WTC11 (cell line): ENCODE measurements at regions of chr11 and their contacts with region 1.

Region 1: DNA sequence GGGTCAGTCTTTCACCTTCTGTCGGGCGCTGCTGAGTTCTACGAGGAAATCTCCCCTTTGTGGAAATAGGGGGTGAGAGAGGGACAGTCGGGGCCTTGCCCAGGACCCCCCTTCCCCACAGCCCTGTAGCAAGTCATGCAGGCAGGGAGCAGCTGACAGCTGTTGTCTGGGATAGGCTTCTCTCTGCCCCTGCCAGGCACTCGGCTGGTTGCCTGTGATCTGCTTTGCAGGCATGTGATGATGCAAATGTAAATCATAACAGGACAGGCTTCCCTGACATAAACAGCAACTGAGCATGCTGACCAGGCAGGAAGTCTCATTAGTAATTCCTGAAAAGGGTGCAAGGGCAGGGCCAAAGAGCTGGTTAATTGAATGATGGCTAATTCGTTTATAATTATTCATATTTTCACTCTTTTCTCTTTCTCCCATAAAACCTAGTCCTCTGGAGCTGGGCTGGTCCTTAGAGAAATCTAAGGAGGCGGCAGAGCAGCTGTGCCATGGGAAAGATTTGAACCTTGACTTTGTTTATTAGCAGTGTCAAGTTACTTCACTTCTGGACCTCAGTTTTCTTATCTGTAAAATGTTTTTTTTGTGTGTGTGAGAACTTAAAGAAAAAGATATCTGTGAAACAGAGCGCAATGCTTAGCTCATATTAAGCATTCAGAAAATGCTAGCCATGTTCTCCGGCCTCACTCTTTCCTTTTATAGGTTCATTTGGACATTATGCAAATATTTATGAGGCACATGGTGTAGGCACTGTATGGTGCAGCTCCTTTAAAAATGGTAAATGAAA is 129.7 kb downstream of the LDLRAD3 start:
- DNase-seq: no peak
- ATAC-seq: no peak
- H3K4me3 Mint-ChIP-seq: no peak overlapping the region
- H3K27ac Mint-ChIP-seq: peak overlapping the region; percentile 82
- H3K4me1 Mint-ChIP-seq: peaks cover 59% of the 10 kb centered on the region
- H3K27me3 Mint-ChIP-seq: no peaks in the 10 kb centered on the region; the same call in 1 of the 2 replicates
- CTCF ChIP-seq: no peak

Region 2: GRCh38 chr11:35765211-35765610 is 308.4 kb before region 1 on chr11:
- CTCF ChIA-PET with region 1: no interaction called
- POLR2A ChIA-PET with region 1: no interaction called
- DNase-seq: no peak
- ATAC-seq: no peak
- H3K4me3 Mint-ChIP-seq: no peak overlapping the region
- H3K27ac Mint-ChIP-seq: no peak overlapping the region
- H3K4me1 Mint-ChIP-seq: peaks cover 9% of the 10 kb centered on the region
- H3K27me3 Mint-ChIP-seq: no peaks in the 10 kb centered on the region
- CTCF ChIP-seq: no peak

Region 3: GRCh38 chr11:35800970-35801953 is 272.3 kb before region 1 on chr11:
- CTCF ChIA-PET with region 1: interaction called, 11 read pairs
- POLR2A ChIA-PET with region 1: no interaction called
- DNase-seq: no peak
- ATAC-seq: no peak
- H3K4me3 Mint-ChIP-seq: no peak overlapping the region
- H3K27ac Mint-ChIP-seq: no peak overlapping the region
- H3K4me1 Mint-ChIP-seq: no peaks in the 10 kb centered on the region; the same call in none of the 2 replicates
- H3K27me3 Mint-ChIP-seq: no peaks in the 10 kb centered on the region
- CTCF ChIP-seq: no peak

Region 4: GRCh38 chr11:36030731-36031281 is 42.8 kb before region 1 on chr11:
- CTCF ChIA-PET with region 1: no interaction called
- POLR2A ChIA-PET with region 1: no interaction called
- DNase-seq: no peak
- ATAC-seq: no peak
- H3K4me3 Mint-ChIP-seq: no peak overlapping the region
- H3K27ac Mint-ChIP-seq: peak overlapping the region; percentile 77; the same call in 1 of the 2 replicates
- H3K4me1 Mint-ChIP-seq: peaks cover 43% of the 10 kb centered on the region
- H3K27me3 Mint-ChIP-seq: no peaks in the 10 kb centered on the region
- CTCF ChIP-seq: no peak

Region 5: DNA sequence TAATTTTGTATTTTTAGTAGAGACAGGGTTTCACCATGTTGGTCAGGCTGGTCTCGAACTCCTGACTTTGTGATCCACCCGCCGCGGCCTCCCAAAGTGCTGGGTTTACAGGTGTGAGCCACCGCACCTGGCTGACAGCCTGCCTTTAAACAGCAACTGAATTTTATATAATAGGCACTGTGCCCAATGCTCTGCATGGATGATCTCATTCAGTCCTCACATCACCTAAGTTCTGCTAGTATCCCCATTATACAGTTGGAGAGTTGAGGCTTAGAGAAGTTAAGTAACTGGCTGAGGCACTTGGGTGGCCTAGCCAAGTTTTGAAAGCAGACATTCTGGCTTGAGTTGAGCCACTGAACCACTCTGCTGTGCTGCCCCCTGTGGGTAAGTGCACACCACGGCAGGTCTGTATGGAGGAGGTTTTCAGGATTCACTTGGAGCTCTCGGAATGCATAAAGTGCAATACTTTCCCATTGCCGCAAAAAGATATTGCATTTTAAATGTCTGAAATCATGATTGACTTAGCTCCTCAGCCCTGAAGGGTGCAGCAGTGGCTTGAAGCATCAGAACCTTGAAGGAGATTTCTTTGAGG is 17.4 kb before region 1 on chr11:
- CTCF ChIA-PET with region 1: interaction called, 66 read pairs
- POLR2A ChIA-PET with region 1: interaction called, 4 read pairs
- DNase-seq: peak; percentile 71
- ATAC-seq: peak; percentile 88
- H3K4me3 Mint-ChIP-seq: no peak overlapping the region
- H3K27ac Mint-ChIP-seq: no peak overlapping the region
- H3K4me1 Mint-ChIP-seq: peaks cover 29% of the 10 kb centered on the region
- H3K27me3 Mint-ChIP-seq: no peaks in the 10 kb centered on the region
- CTCF ChIP-seq: peak; percentile 81

Region 6: GRCh38 chr11:36091256-36091811 is 17.7 kb after region 1 on chr11:
- CTCF ChIA-PET with region 1: interaction called, 18 read pairs
- POLR2A ChIA-PET with region 1: no interaction called
- DNase-seq: no peak
- ATAC-seq: no peak
- H3K4me3 Mint-ChIP-seq: no peak overlapping the region
- H3K27ac Mint-ChIP-seq: peak overlapping the region; percentile 90
- H3K4me1 Mint-ChIP-seq: peaks cover 65% of the 10 kb centered on the region
- H3K27me3 Mint-ChIP-seq: no peaks in the 10 kb centered on the region; the same call in 1 of the 2 replicates
- CTCF ChIP-seq: no peak

Region 7: GRCh38 chr11:36258730-36259360 is 185.2 kb after region 1 on chr11:
- CTCF ChIA-PET with region 1: interaction called, 11 read pairs
- POLR2A ChIA-PET with region 1: no interaction called
- DNase-seq: peak; percentile 74
- ATAC-seq: peak; percentile 93
- H3K4me3 Mint-ChIP-seq: no peak overlapping the region
- H3K27ac Mint-ChIP-seq: no peak overlapping the region
- H3K4me1 Mint-ChIP-seq: peaks cover 5% of the 10 kb centered on the region; the same call in 1 of the 2 replicates
- H3K27me3 Mint-ChIP-seq: peaks cover 12% of the 10 kb centered on the region
- CTCF ChIP-seq: 0 out of 2 replicates have a peak, but pooled peaks have one; percentile 20

Region 8: DNA sequence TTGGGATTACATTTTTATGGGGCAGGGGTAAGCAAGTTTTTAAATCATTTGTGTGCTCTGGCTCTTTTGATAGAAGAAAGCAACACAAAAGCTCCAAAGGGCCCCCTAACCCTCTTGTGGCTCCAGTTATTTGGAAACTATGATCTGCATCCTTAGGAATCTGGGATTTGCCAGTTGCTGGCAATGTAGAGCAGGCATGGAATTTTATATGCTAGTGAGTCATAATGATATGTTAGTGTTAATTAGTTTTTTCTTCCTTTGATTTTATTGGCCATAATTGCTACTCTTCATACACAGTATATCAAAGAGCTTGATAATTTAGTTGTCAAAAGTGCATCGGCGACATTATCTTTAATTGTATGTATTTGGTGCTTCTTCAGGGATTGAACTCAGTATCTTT is 504.3 kb after region 1 on chr11:
- CTCF ChIA-PET with region 1: no interaction called
- POLR2A ChIA-PET with region 1: no interaction called
- DNase-seq: no peak
- ATAC-seq: no peak
- H3K4me3 Mint-ChIP-seq: no peak overlapping the region
- H3K27ac Mint-ChIP-seq: no peak overlapping the region
- H3K4me1 Mint-ChIP-seq: no peaks in the 10 kb centered on the region
- H3K27me3 Mint-ChIP-seq: peaks cover 23% of the 10 kb centered on the region
- CTCF ChIP-seq: no peak

Region 9: GRCh38 chr11:36809303-36809702 is 735.7 kb after region 1 on chr11:
- CTCF ChIA-PET with region 1: no interaction called
- POLR2A ChIA-PET with region 1: no interaction called
- DNase-seq: no peak
- ATAC-seq: no peak
- H3K4me3 Mint-ChIP-seq: no peak overlapping the region
- H3K27ac Mint-ChIP-seq: no peak overlapping the region
- H3K4me1 Mint-ChIP-seq: no peaks in the 10 kb centered on the region
- H3K27me3 Mint-ChIP-seq: peaks cover 20% of the 10 kb centered on the region
- CTCF ChIP-seq: no peak